K562 (cell line): ENCODE measurements at regions of chr22 and their contacts with region 1.

Region 1: GRCh38 chr22:45101515-45102227 is 62.1 kb upstream of the NUP50 start:
- DNase-seq: peak; percentile 30 to 57 (median 38)
- ATAC-seq: peak; percentile 85
- H3K4me3 ChIP-seq: no peak overlapping the region
- H3K27ac ChIP-seq: no peak overlapping the region
- H3K4me1 ChIP-seq: no peaks in the 10 kb centered on the region; a peak in 1 of 5 replicates
- H3K27me3 ChIP-seq: peaks cover 2 to 6% of the 10 kb centered on the region in 2 experiments; a peak in 3 of 5 replicates
- CTCF ChIP-seq: peak; percentile 40 to 63 (median 53); a peak in 5 of 6 replicates
- EP300 ChIP-seq: no peak
- POLR2A ChIP-seq: no peak
- RAD21 ChIP-seq: peak; percentile 25 to 78

Region 2: GRCh38 chr22:45082795-45083194 is 18.9 kb before region 1 on chr22:
- CTCF ChIA-PET with region 1: no interaction called
- POLR2A ChIA-PET with region 1: no interaction called
- in situ Hi-C with region 1: no loop called
- intact Hi-C with region 1: no loop called
- DNase-seq: peak; percentile 15 to 45 (median 29)
- ATAC-seq: 0 out of 3 replicates have a peak, but pooled peaks have one; percentile 28
- H3K4me3 ChIP-seq: no peak overlapping the region
- H3K27ac ChIP-seq: no peak overlapping the region
- H3K4me1 ChIP-seq: no peaks in the 10 kb centered on the region
- H3K27me3 ChIP-seq: peaks cover 0 to 18% of the 10 kb centered on the region in 2 experiments; a peak in 3 of 5 replicates
- CTCF ChIP-seq: peak; percentile 32 to 42 (median 42); a peak in 3 of 6 replicates
- EP300 ChIP-seq: no peak
- POLR2A ChIP-seq: no peak
- RAD21 ChIP-seq: peak in 1 of 2 experiments; percentile 35; a peak in 2 of 4 replicates

Region 3: GRCh38 chr22:45159652-45160462 is 58.2 kb after region 1 on chr22:
- CTCF ChIA-PET with region 1: interaction called, 3 read pairs
- POLR2A ChIA-PET with region 1: no interaction called
- in situ Hi-C with region 1: loop called (anchors 10 kb)
- intact Hi-C with region 1: no loop called
- DNase-seq: peak in 1 of 4 experiments; percentile 17
- ATAC-seq: no peak
- H3K4me3 ChIP-seq: no peak overlapping the region
- H3K27ac ChIP-seq: 0 out of 3 replicates have a peak overlapping the region, but pooled peaks have one; percentile 10
- H3K4me1 ChIP-seq: peaks cover 5 to 15% of the 10 kb centered on the region in 2 experiments; a peak in 4 of 5 replicates
- H3K27me3 ChIP-seq: no peaks in the 10 kb centered on the region
- CTCF ChIP-seq: no peak
- EP300 ChIP-seq: no peak
- POLR2A ChIP-seq: no peak
- RAD21 ChIP-seq: no peak

Region 4: GRCh38 chr22:45208993-45209801 is 107.5 kb after region 1 on chr22:
- CTCF ChIA-PET with region 1: no interaction called
- POLR2A ChIA-PET with region 1: no interaction called
- in situ Hi-C with region 1: no loop called
- intact Hi-C with region 1: loop called (anchors 10 kb)
- DNase-seq: peak; percentile 38 to 78 (median 60)
- ATAC-seq: peak; percentile 69
- H3K4me3 ChIP-seq: no peak overlapping the region
- H3K27ac ChIP-seq: no peak overlapping the region
- H3K4me1 ChIP-seq: peaks cover 0 to 27% of the 10 kb centered on the region in 2 experiments; a peak in 2 of 5 replicates
- H3K27me3 ChIP-seq: peaks cover 0 to 8% of the 10 kb centered on the region in 2 experiments; a peak in 2 of 5 replicates
- CTCF ChIP-seq: peak; percentile 61 to 78 (median 66)
- EP300 ChIP-seq: no peak
- POLR2A ChIP-seq: no peak
- RAD21 ChIP-seq: peak in 1 of 2 experiments; percentile 54; a peak in 2 of 4 replicates

Region 5: GRCh38 chr22:45263463-45264269 is 162.0 kb after region 1 on chr22:
- CTCF ChIA-PET with region 1: no interaction called
- POLR2A ChIA-PET with region 1: no interaction called
- in situ Hi-C with region 1: loop called (anchors 5 kb)
- intact Hi-C with region 1: loop called (anchors 1 kb)
- DNase-seq: peak; percentile 58 to 77 (median 68)
- ATAC-seq: peak; percentile 98
- H3K4me3 ChIP-seq: no peak overlapping the region
- H3K27ac ChIP-seq: no peak overlapping the region
- H3K4me1 ChIP-seq: peaks cover 5 to 15% of the 10 kb centered on the region in 2 experiments; a peak in 3 of 5 replicates
- H3K27me3 ChIP-seq: peaks cover 0 to 18% of the 10 kb centered on the region in 2 experiments; a peak in 3 of 5 replicates
- CTCF ChIP-seq: peak; percentile 68 to 75 (median 70)
- EP300 ChIP-seq: no peak
- POLR2A ChIP-seq: no peak
- RAD21 ChIP-seq: peak; percentile 22 to 74; a peak in 3 of 4 replicates

Region 6: DNA sequence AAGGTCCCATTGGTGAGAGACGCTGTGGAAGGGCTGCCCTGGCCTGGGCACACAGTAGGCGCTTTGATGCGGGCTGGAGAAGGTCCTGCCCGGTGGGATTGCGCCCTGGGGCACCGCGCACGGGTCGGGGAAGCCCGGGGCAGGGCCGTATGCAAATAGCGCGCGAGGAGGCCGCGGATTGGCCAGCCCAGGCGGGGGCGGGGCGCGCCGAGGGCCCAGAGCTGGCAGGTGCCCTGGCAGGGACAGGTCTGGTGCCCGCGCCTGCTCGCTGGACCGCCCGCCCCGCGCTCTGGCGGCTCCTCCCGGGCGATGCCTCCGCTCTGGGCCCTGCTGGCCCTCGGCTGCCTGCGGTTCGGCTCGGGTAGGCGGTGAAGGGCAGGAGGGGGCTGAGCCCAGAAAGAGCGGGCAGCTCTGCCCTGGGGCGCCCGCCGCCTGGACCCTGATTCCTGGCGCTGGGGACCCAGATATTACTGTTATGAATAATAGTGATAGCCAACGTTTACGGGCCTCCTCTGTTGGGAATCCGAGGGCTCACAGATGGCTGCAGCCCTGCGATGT is 183.1 kb after region 1 on chr22 and contains the start of gene UPK3A:
- CTCF ChIA-PET with region 1: no interaction called
- POLR2A ChIA-PET with region 1: no interaction called
- in situ Hi-C with region 1: no loop called
- intact Hi-C with region 1: no loop called
- DNase-seq: peak in 2 of 4 experiments; percentile 20 to 24
- ATAC-seq: peak; percentile 54
- H3K4me3 ChIP-seq: no peak within 1 kb of the TSS
- H3K27ac ChIP-seq: no peak within 1 kb of the TSS
- H3K4me1 ChIP-seq: peaks cover 0 to 7% of the 10 kb centered on the region in 2 experiments; a peak in 3 of 5 replicates
- H3K27me3 ChIP-seq: peaks cover 0 to 16% of the 10 kb centered on the region in 2 experiments; a peak in 2 of 5 replicates
- CTCF ChIP-seq: no peak
- EP300 ChIP-seq: no peak
- POLR2A ChIP-seq: no peak
- RAD21 ChIP-seq: no peak
- polyA plus RNA-seq, gene UPK3A: not detected

Region 7: GRCh38 chr22:45450921-45451651 is 349.4 kb after region 1 on chr22:
- CTCF ChIA-PET with region 1: no interaction called
- POLR2A ChIA-PET with region 1: no interaction called
- in situ Hi-C with region 1: loop called (anchors 10 kb)
- intact Hi-C with region 1: no loop called
- DNase-seq: no peak
- ATAC-seq: no peak
- H3K4me3 ChIP-seq: no peak overlapping the region
- H3K27ac ChIP-seq: no peak overlapping the region
- H3K4me1 ChIP-seq: no peaks in the 10 kb centered on the region
- H3K27me3 ChIP-seq: peaks cover 4 to 36% of the 10 kb centered on the region in 2 experiments; a peak in 3 of 5 replicates
- CTCF ChIP-seq: no peak
- EP300 ChIP-seq: no peak
- POLR2A ChIP-seq: no peak
- RAD21 ChIP-seq: no peak